Activated CD4-positive, alpha-beta T cell treated with anti-CD3 and anti-CD28 coated beads, Interleukin-2, amount 10 ng/mL, durations not matched to agents 24 days and 14 days (primary cell): ENCODE measurements at regions of chr6 and their contacts with region 1.

Region 1: GRCh38 chr6:117555882-117556498 is 46.3 kb downstream of the GOPC start:
- DNase-seq: peak; percentile 86
- H3K4me3 Mint-ChIP-seq: no peak overlapping the region
- H3K27ac Mint-ChIP-seq: no peak overlapping the region
- H3K4me1 Mint-ChIP-seq: peaks cover 1% of the 10 kb centered on the region
- H3K27me3 Mint-ChIP-seq: peaks cover 2% of the 10 kb centered on the region

Region 2: DNA sequence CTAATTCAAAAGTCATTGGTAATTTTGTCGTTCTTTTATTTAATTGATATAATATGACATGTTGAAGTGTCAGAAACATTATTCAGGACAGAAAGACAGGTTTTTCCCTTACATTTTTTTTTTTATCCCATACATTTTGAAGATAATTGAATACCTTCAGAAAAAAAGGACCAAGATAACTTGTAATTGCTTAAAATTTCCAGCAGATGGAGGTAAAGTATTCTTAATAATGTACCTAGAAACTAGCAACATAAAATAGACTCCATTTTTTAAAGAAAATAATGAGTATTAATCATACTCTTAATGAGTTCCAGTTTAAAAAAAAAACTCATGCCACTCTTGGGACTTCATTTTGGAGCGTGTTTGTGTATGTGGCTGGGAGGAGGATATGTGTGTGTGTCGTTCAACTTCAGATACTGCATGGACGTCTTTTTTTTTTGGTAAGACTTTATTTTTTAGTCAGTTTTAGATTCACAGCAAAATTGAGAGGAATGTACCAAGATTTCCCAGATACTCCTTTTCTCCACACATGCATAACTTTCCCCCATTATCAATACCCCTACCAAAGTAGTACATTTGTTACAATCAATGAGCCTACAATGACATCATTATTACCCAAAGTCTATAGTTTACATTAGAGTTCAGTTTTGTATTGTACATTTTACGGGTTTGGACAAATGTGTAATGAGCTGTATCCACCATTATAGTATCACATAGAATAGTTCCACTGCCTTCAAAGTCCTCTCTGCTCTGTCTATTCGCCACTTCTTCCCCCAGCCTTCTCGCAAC is 209.7 kb before region 1 on chr6:
- intact Hi-C with region 1: loop called (anchors 5 kb)
- DNase-seq: no peak
- H3K4me3 Mint-ChIP-seq: no peak overlapping the region
- H3K27ac Mint-ChIP-seq: no peak overlapping the region
- H3K4me1 Mint-ChIP-seq: no peaks in the 10 kb centered on the region
- H3K27me3 Mint-ChIP-seq: peaks cover 7% of the 10 kb centered on the region

Region 3: GRCh38 chr6:117449549-117450439 is 106.2 kb before region 1 on chr6:
- intact Hi-C with region 1: loop called (anchors 1 kb)
- DNase-seq: peak; percentile 88
- H3K4me3 Mint-ChIP-seq: no peak overlapping the region
- H3K27ac Mint-ChIP-seq: no peak overlapping the region
- H3K4me1 Mint-ChIP-seq: no peaks in the 10 kb centered on the region
- H3K27me3 Mint-ChIP-seq: peaks cover 47% of the 10 kb centered on the region

Region 4: DNA sequence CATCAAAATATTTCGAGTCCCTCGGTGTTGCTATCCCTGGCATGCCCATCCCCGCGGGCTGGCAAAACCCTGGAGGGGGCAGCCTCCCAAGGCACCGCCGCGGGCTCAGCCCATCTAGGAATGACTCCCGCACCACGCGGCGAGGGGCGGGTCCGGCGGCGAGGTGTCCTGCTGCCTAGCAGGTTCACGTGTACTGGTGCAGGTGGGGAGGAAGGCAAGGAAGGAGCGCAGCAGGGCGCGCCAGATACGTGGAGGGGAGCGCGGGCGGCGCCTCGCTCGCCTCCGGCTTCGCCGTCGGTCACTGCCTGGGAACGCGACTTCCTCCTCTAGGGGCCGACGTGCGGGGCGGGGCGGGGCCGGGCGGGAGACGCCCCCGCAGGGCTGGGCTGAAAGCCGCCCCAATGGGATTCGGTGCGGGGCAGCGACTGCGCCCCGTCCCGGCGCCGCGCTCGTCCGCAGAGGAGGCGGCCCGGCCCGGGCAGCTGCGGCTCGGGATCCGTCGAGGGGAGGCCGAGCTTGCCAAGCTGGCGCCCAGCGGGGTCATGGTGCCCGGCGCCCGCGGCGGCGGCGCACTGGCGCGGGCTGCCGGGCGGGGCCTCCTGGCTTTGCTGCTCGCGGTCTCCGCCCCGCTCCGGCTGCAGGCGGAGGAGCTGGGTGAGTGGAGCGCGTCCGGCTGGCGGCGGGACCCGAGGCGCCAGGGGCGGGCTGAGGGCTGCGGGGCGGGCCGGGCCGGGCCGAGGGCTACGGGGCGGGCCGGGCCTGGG is 73.6 kb before region 1 on chr6 and contains the start of gene DCBLD1:
- intact Hi-C with region 1: loop called (anchors 1 kb)
- DNase-seq: peak; percentile 90
- H3K4me3 Mint-ChIP-seq: peak within 1 kb of the TSS; percentile 95
- H3K27ac Mint-ChIP-seq: peak within 1 kb of the TSS; percentile 86
- H3K4me1 Mint-ChIP-seq: peaks cover 16% of the 10 kb centered on the region
- H3K27me3 Mint-ChIP-seq: peaks cover 61% of the 10 kb centered on the region
- total RNA-seq, gene DCBLD1: 3.7 and 4.8 TPM in 2 replicates